Astrocyte of the cerebellum (primary cell): ENCODE measurements at regions of chr2 and their contacts with region 1.

Region 1: DNA sequence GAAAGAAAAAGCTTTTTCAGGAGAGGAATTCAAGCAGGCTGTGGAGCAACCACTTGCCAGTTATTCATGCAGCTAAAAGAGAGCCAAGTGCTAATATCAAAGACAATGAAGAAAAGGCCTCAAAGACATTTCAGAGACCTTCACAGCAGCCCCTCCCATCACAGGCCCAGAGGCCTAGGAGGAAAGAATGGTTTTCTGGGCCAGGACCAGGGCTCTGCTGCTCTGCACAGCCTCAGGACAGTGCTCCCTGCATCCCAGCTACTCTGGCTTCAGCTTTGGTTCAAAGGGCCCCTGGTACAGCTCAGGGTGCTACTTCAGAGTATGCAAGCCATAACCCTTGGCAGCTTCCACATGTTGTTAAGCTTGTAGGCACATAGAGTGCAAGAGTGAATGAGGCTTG is 119.5 kb downstream of the MSTN start:
- DNase-seq: no peak
- H3K4me3 ChIP-seq: no peak overlapping the region
- CTCF ChIP-seq: no peak

Region 2: GRCh38 chr2:189885368-189885767 is 57.6 kb before region 1 on chr2:
- in situ Hi-C with region 1: no loop called
- DNase-seq: no peak
- H3K4me3 ChIP-seq: no peak overlapping the region
- CTCF ChIP-seq: no peak

Region 3: GRCh38 chr2:189982777-189983394 is 39.9 kb after region 1 on chr2:
- in situ Hi-C with region 1: no loop called
- DNase-seq: peak; percentile 0
- H3K4me3 ChIP-seq: no peak overlapping the region
- CTCF ChIP-seq: peak; percentile 52

Region 4: GRCh38 chr2:189997016-189997415 is 54.0 kb after region 1 on chr2:
- in situ Hi-C with region 1: loop called (anchors 5 kb)
- DNase-seq: no peak
- H3K4me3 ChIP-seq: no peak overlapping the region
- CTCF ChIP-seq: no peak